ENCODE measurements at regions of chr2 and their contacts with region 1.

Region 1: DNA sequence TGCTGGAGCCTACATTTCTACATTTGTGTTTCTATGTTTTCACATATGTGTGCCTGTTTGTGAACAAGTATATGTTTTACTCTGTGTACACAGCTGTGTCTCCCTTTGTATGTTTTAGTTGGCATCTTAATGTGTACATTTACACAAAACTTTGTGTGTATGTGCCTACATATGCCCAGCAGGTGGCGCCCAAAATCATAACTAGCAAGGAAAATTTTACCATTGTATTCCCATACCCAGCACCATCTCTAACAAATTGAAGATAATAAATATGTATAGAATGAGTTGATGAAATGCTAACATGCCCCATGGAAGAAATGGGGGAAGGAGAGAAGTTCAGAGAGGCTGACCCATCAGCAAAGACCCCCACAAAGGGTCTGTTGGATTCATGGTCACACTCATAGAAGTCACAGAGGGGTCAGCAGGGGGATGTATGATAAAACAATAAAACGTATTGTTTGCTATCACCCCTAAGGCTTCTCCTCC is 48.1 kb downstream of the PKDCC start:
- DNase-seq: peak; percentile 80
- H3K4me3 ChIP-seq: no peak overlapping the region
- H3K27ac ChIP-seq: no peak overlapping the region
- H3K4me1 ChIP-seq: peaks cover 22% of the 10 kb centered on the region
- CTCF ChIP-seq: peak; percentile 98

Region 2: GRCh38 chr2:42132966-42133641 is 37.1 kb after region 1 on chr2:
- CTCF ChIA-PET with region 1: interaction called, 3 read pairs
- POLR2A ChIA-PET with region 1: no interaction called
- intact Hi-C with region 1: loop called (anchors 1 kb)
- DNase-seq: peak; percentile 92
- H3K4me3 ChIP-seq: peak overlapping the region; percentile 54
- H3K27ac ChIP-seq: peak overlapping the region; percentile 68
- H3K4me1 ChIP-seq: peaks cover 63% of the 10 kb centered on the region
- CTCF ChIP-seq: no peak

Region 3: GRCh38 chr2:42196403-42197267 is 100.7 kb after region 1 on chr2:
- CTCF ChIA-PET with region 1: no interaction called
- POLR2A ChIA-PET with region 1: no interaction called
- intact Hi-C with region 1: loop called (anchors 1 kb)
- DNase-seq: peak; percentile 70
- H3K4me3 ChIP-seq: no peak overlapping the region
- H3K27ac ChIP-seq: no peak overlapping the region
- H3K4me1 ChIP-seq: peaks cover 4% of the 10 kb centered on the region
- CTCF ChIP-seq: peak; percentile 89

Region 4: DNA sequence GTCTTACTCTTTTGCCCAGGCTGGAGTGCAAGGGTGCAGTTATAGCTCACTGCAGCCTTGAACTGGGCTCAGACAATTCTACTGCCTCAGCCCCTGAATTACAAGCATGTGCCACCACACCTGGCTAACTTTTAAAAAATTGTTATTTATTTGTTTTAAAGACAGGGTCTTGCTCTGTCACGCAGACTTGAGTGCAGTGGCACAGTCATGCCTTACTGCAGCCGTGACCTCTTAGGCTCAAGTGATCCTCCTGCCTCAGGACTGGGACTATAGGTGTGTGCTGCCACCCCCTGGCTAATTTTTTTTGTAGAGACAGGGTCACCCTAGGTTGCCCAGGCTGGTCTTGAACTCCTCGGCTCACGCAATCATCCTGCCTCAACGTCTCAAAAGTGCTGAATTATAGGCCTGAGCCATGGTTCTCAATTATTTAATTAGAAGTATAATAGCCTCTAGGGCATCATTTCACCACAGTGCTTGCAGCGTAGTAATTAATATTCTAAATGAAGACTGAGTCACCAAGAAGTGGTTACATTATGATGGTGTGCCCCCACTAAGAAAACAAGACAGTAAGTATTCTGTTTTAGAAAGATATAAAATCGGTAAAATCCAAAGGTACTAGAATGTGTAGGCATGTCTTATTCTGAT is 142.8 kb after region 1 on chr2:
- CTCF ChIA-PET with region 1: interaction called, 8 read pairs
- POLR2A ChIA-PET with region 1: no interaction called
- intact Hi-C with region 1: loop called (anchors 1 kb)
- DNase-seq: peak; percentile 76
- H3K4me3 ChIP-seq: no peak overlapping the region
- H3K27ac ChIP-seq: no peak overlapping the region
- H3K4me1 ChIP-seq: no peaks in the 10 kb centered on the region
- CTCF ChIP-seq: peak; percentile 85

Region 5: GRCh38 chr2:42328148-42328833 is 232.3 kb after region 1 on chr2:
- CTCF ChIA-PET with region 1: interaction called, 3 read pairs
- POLR2A ChIA-PET with region 1: interaction called, 3 read pairs
- intact Hi-C with region 1: loop called (anchors 1 kb)
- DNase-seq: peak; percentile 60
- H3K4me3 ChIP-seq: no peak overlapping the region
- H3K27ac ChIP-seq: no peak overlapping the region
- H3K4me1 ChIP-seq: no peaks in the 10 kb centered on the region
- CTCF ChIP-seq: peak; percentile 93

Region 6: DNA sequence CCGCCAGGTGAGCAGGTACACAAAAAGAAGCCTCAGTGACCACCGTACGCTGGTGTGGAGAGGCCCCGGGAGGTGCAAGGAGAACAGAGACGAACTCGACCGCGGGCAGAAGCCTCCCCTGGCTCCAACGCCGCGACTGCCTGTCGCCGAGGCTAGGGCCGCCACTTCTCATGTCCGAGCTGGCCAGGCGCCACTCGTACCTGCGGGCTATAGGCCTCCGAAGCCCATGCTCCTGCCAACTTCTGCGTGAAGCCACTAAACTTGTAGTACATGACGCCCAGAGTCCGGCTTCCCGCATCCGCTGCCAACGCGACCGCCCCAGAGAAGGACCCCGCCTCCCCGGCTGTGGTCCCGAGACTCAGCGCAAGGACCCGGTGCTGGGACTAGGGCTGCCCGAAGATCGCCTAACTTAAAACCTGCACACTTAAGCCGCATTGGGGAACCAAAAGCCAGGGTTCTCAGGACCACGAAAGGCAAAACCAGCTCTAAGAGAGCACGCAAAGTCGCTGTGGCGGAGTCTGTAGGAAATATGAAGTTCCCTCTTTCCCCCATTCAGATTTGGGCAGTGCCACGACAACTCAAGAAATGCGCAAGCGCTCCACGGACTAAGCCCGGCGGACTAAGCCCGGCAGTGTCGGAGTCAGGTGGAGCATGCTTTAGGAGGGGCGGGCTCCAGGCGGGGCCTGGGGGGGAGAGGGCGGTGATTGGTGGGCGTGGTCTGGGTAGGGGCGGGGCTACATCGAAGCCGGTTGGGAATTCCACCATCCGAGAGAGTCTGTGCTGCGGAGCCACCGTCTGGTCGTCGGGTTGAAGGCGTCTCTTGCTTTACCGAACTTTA is 265.1 kb after region 1 on chr2 and contains the start of gene COX7A2L:
- CTCF ChIA-PET with region 1: no interaction called
- POLR2A ChIA-PET with region 1: interaction called, 5 read pairs
- intact Hi-C with region 1: loop called (anchors 5 kb)
- DNase-seq: peak; percentile 97
- H3K4me3 ChIP-seq: peak within 1 kb of the TSS; percentile 96
- H3K27ac ChIP-seq: peak within 1 kb of the TSS; percentile 79
- H3K4me1 ChIP-seq: peaks cover 27% of the 10 kb centered on the region
- CTCF ChIP-seq: peak; percentile 70
- total RNA-seq, gene COX7A2L: 121 and 130 TPM in 2 replicates